AG04449 (cell line): ENCODE measurements at regions of chr19 and their contacts with region 1.

Region 1: GRCh38 chr19:39397360-39398296 is 6.5 kb downstream of the MED29 start:
- DNase-seq: no peak
- H3K4me3 ChIP-seq: no peak overlapping the region
- CTCF ChIP-seq: peak; percentile 99

Region 2: GRCh38 chr19:39110263-39110967 is 287.2 kb before region 1 on chr19:
- CTCF ChIA-PET with region 1: no interaction called
- POLR2A ChIA-PET with region 1: no interaction called
- DNase-seq: no peak
- H3K4me3 ChIP-seq: no peak overlapping the region
- CTCF ChIP-seq: peak; percentile 71

Region 3: GRCh38 chr19:39363901-39364457 is 33.6 kb before region 1 on chr19:
- CTCF ChIA-PET with region 1: interaction called, 10 read pairs
- POLR2A ChIA-PET with region 1: interaction called, 3 read pairs
- DNase-seq: no peak
- H3K4me3 ChIP-seq: no peak overlapping the region
- CTCF ChIP-seq: no peak

Region 4: DNA sequence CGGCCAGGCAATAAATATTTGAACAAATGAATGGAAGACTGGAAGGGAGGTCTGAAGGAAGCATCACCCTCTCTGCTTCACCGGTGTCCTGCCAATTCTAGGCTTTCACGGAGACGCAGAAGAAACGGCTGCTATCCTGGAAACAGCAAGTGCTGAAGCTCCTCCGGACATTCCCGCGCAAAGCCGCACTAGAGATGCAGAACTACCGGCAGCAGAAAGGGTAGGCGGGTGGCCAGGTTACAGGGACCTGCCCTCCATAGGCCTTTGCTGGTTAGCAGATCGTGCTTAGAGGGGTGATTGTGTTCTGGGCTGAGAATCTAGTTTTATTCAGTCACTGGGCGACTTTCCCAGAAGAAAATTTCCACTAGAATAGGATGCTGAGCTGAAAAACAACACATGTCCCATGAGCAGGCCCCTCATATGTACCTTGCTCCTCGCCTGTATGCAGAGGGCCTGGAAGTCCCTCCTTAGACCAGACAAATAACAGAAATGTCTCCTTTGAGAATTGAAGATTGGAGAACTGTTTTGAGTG is 17.7 kb before region 1 on chr19:
- CTCF ChIA-PET with region 1: interaction called, 15 read pairs
- POLR2A ChIA-PET with region 1: no interaction called
- DNase-seq: no peak
- H3K4me3 ChIP-seq: no peak overlapping the region
- CTCF ChIP-seq: no peak

Region 5: GRCh38 chr19:39412100-39412866 is 14.7 kb after region 1 on chr19 and contains the start of gene PLEKHG2:
- CTCF ChIA-PET with region 1: interaction called, 102 read pairs
- POLR2A ChIA-PET with region 1: interaction called, 49 read pairs
- DNase-seq: peak; percentile 99
- H3K4me3 ChIP-seq: peak within 1 kb of the TSS; percentile 87
- CTCF ChIP-seq: peak; percentile 84

Region 6: GRCh38 chr19:39423258-39424086 is 25.8 kb after region 1 on chr19:
- CTCF ChIA-PET with region 1: interaction called, 20 read pairs
- POLR2A ChIA-PET with region 1: interaction called, 4 read pairs
- DNase-seq: no peak
- H3K4me3 ChIP-seq: no peak overlapping the region
- CTCF ChIP-seq: no peak

Region 7: GRCh38 chr19:39428283-39429112 is 30.9 kb after region 1 on chr19:
- CTCF ChIA-PET with region 1: interaction called, 18 read pairs
- POLR2A ChIA-PET with region 1: interaction called, 4 read pairs
- DNase-seq: no peak
- H3K4me3 ChIP-seq: peak overlapping the region; percentile 2; the same call in 1 of the 2 replicates
- CTCF ChIP-seq: no peak

Region 8: GRCh38 chr19:39532233-39533002 is 134.8 kb after region 1 on chr19 and contains the start of gene EID2B:
- CTCF ChIA-PET with region 1: interaction called, 38 read pairs
- POLR2A ChIA-PET with region 1: no interaction called
- DNase-seq: peak; percentile 56
- H3K4me3 ChIP-seq: peak within 1 kb of the TSS; percentile 83
- CTCF ChIP-seq: peak; percentile 97

Region 9: GRCh38 chr19:39655613-39656012 is 258.0 kb after region 1 on chr19 and contains the start of gene LGALS16:
- CTCF ChIA-PET with region 1: no interaction called
- POLR2A ChIA-PET with region 1: no interaction called
- DNase-seq: no peak
- H3K4me3 ChIP-seq: no peak within 1 kb of the TSS
- CTCF ChIP-seq: no peak